Endothelial cell of umbilical vein (primary cell): ENCODE measurements at regions of chr5 and their contacts with region 1.

Region 1: DNA sequence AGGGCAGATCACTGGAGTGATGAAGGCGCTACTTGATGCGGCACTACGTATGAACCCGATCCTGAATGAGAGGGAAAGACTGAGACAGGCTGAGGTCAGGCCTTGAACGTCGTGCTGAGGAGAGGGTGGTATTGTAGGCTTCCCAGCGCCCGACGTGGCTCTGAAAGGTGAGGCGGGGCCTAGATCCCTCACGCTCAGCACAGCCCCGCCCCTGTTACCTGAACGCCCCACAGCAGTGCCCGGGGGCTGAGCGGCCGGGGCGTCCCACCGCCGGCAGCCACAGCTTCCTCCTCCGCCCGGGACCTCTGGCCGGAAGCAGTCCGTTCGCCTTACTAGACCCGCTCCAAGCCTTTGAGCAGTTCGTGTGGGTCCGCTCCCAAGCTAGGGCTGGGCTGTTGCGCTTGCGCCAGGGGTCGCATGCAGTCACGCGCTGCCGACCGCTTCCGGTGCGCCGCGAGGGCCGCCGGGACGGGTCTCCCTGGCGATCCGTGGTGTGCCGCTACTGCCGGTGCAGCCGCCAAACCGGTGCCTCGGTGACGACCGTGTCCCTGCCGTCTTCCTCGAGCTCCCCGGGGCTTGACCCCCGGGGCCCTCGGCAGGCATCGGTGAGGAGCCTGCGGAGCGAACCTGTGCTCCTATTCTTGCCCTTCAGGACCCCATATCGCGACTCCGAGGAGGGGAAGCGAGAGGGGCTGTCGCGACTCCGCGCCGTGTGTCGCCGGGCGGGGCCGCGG is at the starts of genes HMGXB3 and TIGD6:
- DNase-seq: peak; percentile 94
- H3K4me3 ChIP-seq: peak within 1 kb of the TSS; percentile 42 to 97 (median 86)
- H3K27ac ChIP-seq: peak within 1 kb of the TSS; percentile 72
- H3K4me1 ChIP-seq: peaks cover 23% of the 10 kb centered on the region
- H3K27me3 ChIP-seq: no peaks in the 10 kb centered on the region
- CTCF ChIP-seq: peak in 1 of 2 donors; percentile 8
- POLR2A ChIP-seq: peak; percentile 96
- total RNA-seq, gene HMGXB3: 43.0 and 52.6 TPM in 2 replicates
- total RNA-seq, gene TIGD6: 3.6 and 4.1 TPM in 2 replicates

Region 2: DNA sequence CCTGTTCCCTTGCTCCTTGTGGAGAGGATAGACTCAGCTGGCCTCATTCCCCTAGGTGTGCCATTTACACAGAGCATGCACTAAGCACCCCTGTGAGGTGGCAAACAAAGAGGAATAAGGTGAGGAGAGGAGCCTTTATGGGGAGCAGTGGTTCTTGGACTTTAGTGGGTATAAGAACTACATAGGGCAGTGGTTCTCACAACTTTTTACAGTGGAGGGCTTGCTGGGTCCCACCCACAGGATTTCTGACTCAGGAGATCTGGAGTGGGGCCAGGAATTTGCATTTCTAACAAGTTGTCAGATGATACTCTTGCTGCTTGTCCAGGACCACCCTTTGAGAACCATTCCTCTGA is 43.9 kb after region 1 on chr5:
- CTCF ChIA-PET with region 1: interaction called, 3 read pairs
- POLR2A ChIA-PET with region 1: no interaction called
- dilution Hi-C with region 1: no loop called
- intact Hi-C with region 1: loop called (anchors 1 kb)
- DNase-seq: peak; percentile 83
- H3K4me3 ChIP-seq: no peak overlapping the region
- H3K27ac ChIP-seq: peak overlapping the region; percentile 58
- H3K4me1 ChIP-seq: peaks cover 21% of the 10 kb centered on the region
- H3K27me3 ChIP-seq: no peaks in the 10 kb centered on the region
- CTCF ChIP-seq: no peak
- POLR2A ChIP-seq: no peak